ENCODE measurements at regions of chr3 and their contacts with region 1.

Region 1: GRCh38 chr3:141738022-141738890 is at the start of gene RNF7:
- DNase-seq: peak; percentile 98
- H3K4me3 ChIP-seq: peak within 1 kb of the TSS; percentile 96 to 97
- H3K27ac ChIP-seq: peak within 1 kb of the TSS; percentile 83 to 92
- H3K4me1 ChIP-seq: peaks cover 13 to 15% of the 10 kb centered on the region in 2 experiments; a peak in 3 of 4 replicates
- H3K27me3 ChIP-seq: no peaks in the 10 kb centered on the region
- CTCF ChIP-seq: peak; percentile 77
- EP300 ChIP-seq: 0 out of 4 replicates have a peak, but pooled peaks of 1 of the 2 experiments have one; percentile 29
- RAD21 ChIP-seq: peak; percentile 75
- polyA plus RNA-seq, gene RNF7: 77.1 and 119 TPM in 2 replicates

Region 2: GRCh38 chr3:141379250-141379966 is 358.8 kb before region 1 on chr3:
- CTCF ChIA-PET with region 1: no interaction called
- POLR2A ChIA-PET with region 1: no interaction called
- DNase-seq: no peak
- H3K4me3 ChIP-seq: no peak overlapping the region
- H3K27ac ChIP-seq: no peak overlapping the region
- H3K4me1 ChIP-seq: no peaks in the 10 kb centered on the region; a peak in 1 of 4 replicates
- H3K27me3 ChIP-seq: no peaks in the 10 kb centered on the region
- CTCF ChIP-seq: no peak
- EP300 ChIP-seq: no peak
- RAD21 ChIP-seq: no peak

Region 3: DNA sequence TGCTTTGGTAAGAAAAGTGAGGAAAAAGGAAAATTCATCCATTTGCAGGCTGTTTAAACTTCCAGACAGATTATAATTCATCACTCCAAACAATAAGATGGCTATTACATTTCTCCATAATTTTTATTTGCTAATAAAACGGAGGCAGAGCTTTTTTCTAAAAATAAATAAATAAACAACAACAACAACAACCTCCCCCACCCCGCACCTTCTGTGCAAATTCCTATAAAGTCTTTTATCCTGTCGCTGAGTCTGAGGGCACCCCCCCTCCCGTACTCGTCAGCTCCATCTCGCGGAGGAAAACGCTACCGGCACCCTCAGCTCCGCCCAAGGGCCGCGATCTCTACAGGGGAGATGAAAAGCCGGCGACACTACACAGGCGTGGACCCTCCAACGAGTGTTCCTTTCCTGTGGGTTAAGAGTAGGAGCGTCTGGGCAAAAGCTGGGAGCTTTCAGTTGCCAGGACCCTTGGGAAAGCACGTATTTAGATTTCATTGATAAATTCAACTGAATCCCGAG is 137.2 kb after region 1 on chr3:
- CTCF ChIA-PET with region 1: interaction called, 45 read pairs
- POLR2A ChIA-PET with region 1: interaction called, 9 read pairs
- DNase-seq: peak; percentile 88
- H3K4me3 ChIP-seq: peak overlapping the region; percentile 79 to 85
- H3K27ac ChIP-seq: peak overlapping the region; percentile 95
- H3K4me1 ChIP-seq: peaks cover 0 to 6% of the 10 kb centered on the region in 2 experiments; a peak in 3 of 4 replicates
- H3K27me3 ChIP-seq: no peaks in the 10 kb centered on the region
- CTCF ChIP-seq: peak; percentile 87
- EP300 ChIP-seq: no peak
- RAD21 ChIP-seq: peak; percentile 70

Region 4: DNA sequence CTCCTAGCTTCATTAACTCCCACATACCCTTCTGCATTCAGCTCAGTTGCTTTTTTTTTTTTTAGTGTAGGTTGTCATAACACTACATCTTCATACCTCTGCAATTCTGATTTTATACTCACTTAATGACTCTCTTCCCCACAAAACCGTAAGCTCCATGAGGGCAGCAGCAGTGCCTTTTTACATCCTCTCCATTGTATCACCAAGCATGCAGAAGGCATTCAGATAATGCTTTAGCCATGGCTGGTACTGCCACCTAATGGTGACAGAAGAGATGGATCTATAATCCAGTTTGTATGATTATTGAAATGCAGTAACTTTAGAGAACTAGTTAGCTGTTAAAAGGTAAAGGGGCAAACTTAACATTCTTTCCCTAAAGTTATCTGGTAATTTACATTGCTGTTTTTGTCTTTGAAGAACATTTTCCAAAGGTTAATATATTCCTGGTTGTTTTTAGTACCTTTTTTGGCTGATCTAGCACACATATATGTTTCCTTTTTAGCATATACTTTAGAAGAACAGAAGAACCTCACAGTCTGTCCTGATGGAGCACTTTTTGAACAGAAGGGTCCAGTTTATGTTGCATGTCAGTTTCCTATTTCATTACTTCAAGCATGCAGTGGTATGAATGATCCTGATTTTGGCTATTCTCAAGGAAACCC is 175.0 kb after region 1 on chr3:
- CTCF ChIA-PET with region 1: interaction called, 10 read pairs
- POLR2A ChIA-PET with region 1: no interaction called
- DNase-seq: peak; percentile 58
- H3K4me3 ChIP-seq: no peak overlapping the region
- H3K27ac ChIP-seq: no peak overlapping the region
- H3K4me1 ChIP-seq: peaks cover 0 to 10% of the 10 kb centered on the region in 2 experiments; a peak in 3 of 4 replicates
- H3K27me3 ChIP-seq: no peaks in the 10 kb centered on the region
- CTCF ChIP-seq: peak; percentile 78
- EP300 ChIP-seq: no peak
- RAD21 ChIP-seq: peak; percentile 77

Measured in SK-N-SH (cell line).